ENCODE measurements at regions of chr4 and their contacts with region 1.

Region 1: DNA sequence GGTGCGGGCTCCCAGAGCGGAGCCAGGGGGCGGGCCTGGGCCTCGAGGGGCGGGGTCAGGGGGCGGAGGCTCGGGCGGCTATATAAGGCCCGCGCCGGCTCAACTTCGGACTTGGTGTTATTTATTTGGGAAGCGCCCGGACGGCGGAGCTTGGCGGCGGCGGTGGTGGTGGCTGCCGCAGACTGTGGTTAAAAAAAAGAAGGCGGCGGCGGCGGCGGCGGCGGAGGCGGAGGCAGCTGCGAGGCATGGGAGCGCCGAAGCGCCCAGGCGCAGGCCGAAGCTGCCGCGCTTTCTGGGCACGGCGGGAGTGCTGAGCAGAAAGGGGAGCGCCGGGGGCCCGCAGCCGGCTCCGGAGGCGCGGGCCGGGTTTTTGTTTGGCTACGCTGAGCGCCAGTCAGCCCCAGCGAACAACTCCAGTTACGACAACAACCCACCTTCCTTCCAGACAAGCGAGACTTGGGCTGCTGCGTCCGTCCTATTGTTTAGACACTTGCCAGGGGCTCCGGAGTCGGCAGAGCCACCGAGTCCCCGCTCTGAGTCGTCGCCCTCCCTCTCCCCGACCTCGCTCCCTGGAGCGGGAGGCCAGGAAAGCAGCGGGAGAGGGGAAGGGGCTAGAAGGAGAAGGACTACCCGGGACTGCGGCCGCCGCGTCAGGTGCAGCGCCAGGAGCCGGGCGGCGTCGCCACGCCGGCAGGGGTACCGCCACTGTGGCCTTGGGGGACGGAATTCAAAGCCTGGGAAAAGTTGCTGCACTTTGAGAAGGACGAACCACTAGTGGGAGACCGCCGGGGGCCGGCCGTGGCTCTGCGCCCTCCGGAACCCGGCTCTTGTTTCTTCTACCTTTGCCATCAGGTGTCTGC is at the start of gene SLIT2:
- DNase-seq: peak; percentile 24
- ATAC-seq: peak; percentile 93
- H3K4me3 ChIP-seq: peak within 1 kb of the TSS; percentile 40 to 60
- H3K27ac ChIP-seq: no peak within 1 kb of the TSS
- H3K4me1 ChIP-seq: peaks cover 0 to 12% of the 10 kb centered on the region in 2 experiments; a peak in 1 of 4 replicates
- H3K27me3 ChIP-seq: no peaks in the 10 kb centered on the region
- CTCF ChIP-seq: no peak
- POLR2A ChIP-seq: no peak
- RAD21 ChIP-seq: no peak
- total RNA-seq, gene SLIT2: 3.8 TPM

Region 2: DNA sequence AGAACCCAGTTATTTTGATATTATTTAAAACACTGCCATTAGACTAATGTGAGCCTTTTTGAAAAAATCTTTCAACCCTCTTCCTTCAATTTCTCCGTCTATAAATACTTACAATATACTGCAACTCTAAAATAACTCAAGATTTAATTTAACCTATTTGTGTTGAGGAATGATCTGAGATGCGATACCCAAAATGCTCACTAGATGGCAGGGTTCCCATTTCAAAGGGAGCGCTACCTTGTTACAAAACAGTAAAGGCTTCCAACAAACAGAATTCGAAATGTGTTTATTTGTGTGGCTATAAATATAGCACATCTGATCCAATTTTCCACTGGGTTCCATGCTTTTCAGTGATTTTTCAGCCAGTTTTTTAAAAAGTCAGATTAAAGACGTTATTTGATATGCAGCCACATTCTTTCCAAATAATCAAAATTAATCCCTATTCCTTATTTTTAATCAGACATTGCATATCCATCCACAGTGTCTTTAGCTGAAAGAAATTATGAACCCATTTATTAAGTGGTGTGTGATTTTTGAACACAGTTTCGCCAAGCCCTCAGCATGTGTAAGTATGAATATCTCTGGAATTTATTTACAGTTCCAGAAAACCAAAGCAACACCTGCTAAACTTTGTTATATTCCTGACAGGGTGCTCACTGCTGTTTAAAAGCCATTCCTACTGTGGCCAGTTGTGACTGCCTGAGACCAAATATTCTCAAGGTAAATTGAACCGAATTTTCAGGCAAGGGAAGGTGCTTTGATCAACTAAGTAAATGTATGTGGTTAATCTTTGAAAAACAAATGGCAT is 1562.5 kb before region 1 on chr4:
- CTCF ChIA-PET with region 1: no interaction called
- POLR2A ChIA-PET with region 1: no interaction called
- RAD21 ChIA-PET with region 1: no interaction called
- intact Hi-C with region 1: loop called (anchors 2 kb)
- DNase-seq: peak; percentile 44
- ATAC-seq: 0 out of 2 replicates have a peak, but pooled peaks have one; percentile 46
- H3K4me3 ChIP-seq: no peak overlapping the region
- H3K27ac ChIP-seq: no peak overlapping the region
- H3K4me1 ChIP-seq: no peaks in the 10 kb centered on the region
- H3K27me3 ChIP-seq: no peaks in the 10 kb centered on the region; the same call in 1 of the 2 replicates
- CTCF ChIP-seq: peak; percentile 59 to 87 (median 76)
- POLR2A ChIP-seq: no peak
- RAD21 ChIP-seq: peak; percentile 81

Region 3: GRCh38 chr4:19224820-19225219 is 1027.2 kb before region 1 on chr4:
- CTCF ChIA-PET with region 1: interaction called, 4 read pairs
- POLR2A ChIA-PET with region 1: no interaction called
- RAD21 ChIA-PET with region 1: no interaction called
- intact Hi-C with region 1: loop called (anchors 2 kb)
- DNase-seq: peak; percentile 16
- ATAC-seq: no peak
- H3K4me3 ChIP-seq: no peak overlapping the region
- H3K27ac ChIP-seq: no peak overlapping the region
- H3K4me1 ChIP-seq: no peaks in the 10 kb centered on the region
- H3K27me3 ChIP-seq: no peaks in the 10 kb centered on the region
- CTCF ChIP-seq: peak in 2 of 3 experiments; percentile 13 to 39; a peak in 3 of 6 replicates
- POLR2A ChIP-seq: no peak
- RAD21 ChIP-seq: peak; percentile 48

Region 4: DNA sequence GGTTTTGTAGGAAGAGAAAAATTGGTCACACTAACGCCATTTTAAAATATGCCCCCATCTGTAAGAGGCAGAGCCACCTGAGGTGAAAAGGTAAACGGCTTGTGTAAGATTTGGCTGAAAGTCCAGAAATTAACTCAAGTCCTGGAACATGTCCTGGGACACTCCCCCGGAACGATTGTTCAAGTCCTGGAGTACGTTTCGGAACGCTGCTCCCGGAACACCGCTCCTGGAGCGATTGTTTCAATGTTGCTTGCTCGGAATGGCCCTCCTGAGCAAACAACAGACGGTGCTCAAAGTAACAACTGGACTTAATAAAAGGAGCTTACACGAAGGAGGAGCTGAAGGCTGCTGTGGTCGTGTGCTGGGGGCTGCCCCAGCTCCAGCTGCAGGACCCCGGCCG is 796.8 kb before region 1 on chr4:
- CTCF ChIA-PET with region 1: interaction called, 3 read pairs
- POLR2A ChIA-PET with region 1: no interaction called
- RAD21 ChIA-PET with region 1: no interaction called
- intact Hi-C with region 1: loop called (anchors 2 kb)
- DNase-seq: peak; percentile 45
- ATAC-seq: peak; percentile 60
- H3K4me3 ChIP-seq: peak overlapping the region; percentile 69 to 83
- H3K27ac ChIP-seq: peak overlapping the region; percentile 72
- H3K4me1 ChIP-seq: 0 out of 4 replicates have a peak, but pooled peaks cover 0 to 6% of the 10 kb centered on the region in 2 experiments
- H3K27me3 ChIP-seq: no peaks in the 10 kb centered on the region
- CTCF ChIP-seq: no peak
- POLR2A ChIP-seq: no peak
- RAD21 ChIP-seq: no peak

Region 5: DNA sequence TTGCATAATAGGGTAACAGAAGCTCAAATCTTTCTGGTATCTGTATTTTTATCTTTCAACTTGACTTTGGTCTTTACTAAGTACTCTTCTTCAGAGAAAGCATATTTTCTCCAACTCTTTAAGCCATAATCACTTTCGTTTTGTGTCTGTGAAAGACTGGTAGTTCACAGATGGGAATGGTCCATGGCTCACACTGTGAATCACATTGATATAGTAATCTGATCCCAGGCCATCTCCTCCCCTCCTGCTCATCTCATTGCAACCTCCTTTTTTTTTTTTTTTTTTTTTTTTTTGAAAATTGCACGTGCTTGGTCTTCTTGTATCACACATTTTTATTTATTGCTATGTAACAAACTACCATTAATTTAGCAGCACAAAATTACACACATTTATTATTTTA is 694.9 kb before region 1 on chr4:
- CTCF ChIA-PET with region 1: no interaction called
- POLR2A ChIA-PET with region 1: no interaction called
- RAD21 ChIA-PET with region 1: no interaction called
- intact Hi-C with region 1: loop called (anchors 5 kb)
- DNase-seq: no peak
- ATAC-seq: no peak
- H3K4me3 ChIP-seq: no peak overlapping the region
- H3K27ac ChIP-seq: no peak overlapping the region
- H3K4me1 ChIP-seq: peaks cover 11 to 28% of the 10 kb centered on the region in 2 experiments
- H3K27me3 ChIP-seq: no peaks in the 10 kb centered on the region
- CTCF ChIP-seq: no peak
- POLR2A ChIP-seq: no peak
- RAD21 ChIP-seq: no peak